ENCODE measurements at regions of chr12 and their contacts with region 1.

Region 1: DNA sequence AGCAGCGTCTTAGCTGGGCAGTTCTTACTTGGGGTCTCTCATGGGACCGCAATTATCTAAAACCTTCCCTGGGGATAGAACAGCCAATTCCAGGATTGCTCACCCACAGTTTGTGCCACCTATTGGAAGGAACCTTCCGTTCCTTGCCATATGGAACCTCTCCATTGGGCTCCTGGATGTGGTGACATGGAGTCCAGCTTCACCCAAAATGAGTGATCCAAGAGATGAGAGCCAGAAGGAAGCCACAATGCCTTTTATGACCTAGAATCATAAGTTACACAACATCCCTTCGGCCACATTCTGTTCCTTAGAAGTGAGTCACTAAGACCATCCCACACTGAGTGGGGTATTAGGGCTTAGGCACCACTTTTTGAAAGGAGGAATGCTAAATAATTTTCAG is 164.4 kb downstream of the FBXL14 start:
- DNase-seq: peak; percentile 11
- H3K4me3 ChIP-seq: no peak overlapping the region
- CTCF ChIP-seq: no peak

Region 2: GRCh38 chr12:1474574-1475153 is 44.7 kb after region 1 on chr12:
- in situ Hi-C with region 1: loop called (anchors 5 kb)
- DNase-seq: peak; percentile 80
- H3K4me3 ChIP-seq: peak overlapping the region; percentile 2
- CTCF ChIP-seq: no peak

Region 3: DNA sequence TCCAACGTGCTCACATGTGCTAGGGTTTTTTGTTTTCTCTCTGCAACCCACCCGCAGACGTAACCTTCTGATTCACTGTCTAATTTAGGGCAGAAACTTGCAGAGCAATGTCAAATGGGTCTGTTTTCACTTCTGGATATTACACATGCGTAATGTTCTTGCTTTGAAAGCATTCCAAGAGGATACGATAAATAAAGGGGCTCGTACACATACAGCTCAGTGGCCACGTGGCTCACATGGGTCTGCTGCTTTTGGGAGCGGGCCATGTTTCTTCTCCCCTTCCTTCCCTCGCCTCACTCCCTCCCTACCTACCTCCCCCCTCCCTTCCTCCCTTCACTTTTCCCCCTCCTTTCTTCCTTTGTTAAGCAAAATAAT is 646.2 kb after region 1 on chr12:
- in situ Hi-C with region 1: no loop called
- DNase-seq: no peak
- H3K4me3 ChIP-seq: no peak overlapping the region
- CTCF ChIP-seq: no peak